Sciatic nerve (tissue), 2 donors: ENCODE measurements at regions of chr7 and their contacts with region 1.

Region 1: DNA sequence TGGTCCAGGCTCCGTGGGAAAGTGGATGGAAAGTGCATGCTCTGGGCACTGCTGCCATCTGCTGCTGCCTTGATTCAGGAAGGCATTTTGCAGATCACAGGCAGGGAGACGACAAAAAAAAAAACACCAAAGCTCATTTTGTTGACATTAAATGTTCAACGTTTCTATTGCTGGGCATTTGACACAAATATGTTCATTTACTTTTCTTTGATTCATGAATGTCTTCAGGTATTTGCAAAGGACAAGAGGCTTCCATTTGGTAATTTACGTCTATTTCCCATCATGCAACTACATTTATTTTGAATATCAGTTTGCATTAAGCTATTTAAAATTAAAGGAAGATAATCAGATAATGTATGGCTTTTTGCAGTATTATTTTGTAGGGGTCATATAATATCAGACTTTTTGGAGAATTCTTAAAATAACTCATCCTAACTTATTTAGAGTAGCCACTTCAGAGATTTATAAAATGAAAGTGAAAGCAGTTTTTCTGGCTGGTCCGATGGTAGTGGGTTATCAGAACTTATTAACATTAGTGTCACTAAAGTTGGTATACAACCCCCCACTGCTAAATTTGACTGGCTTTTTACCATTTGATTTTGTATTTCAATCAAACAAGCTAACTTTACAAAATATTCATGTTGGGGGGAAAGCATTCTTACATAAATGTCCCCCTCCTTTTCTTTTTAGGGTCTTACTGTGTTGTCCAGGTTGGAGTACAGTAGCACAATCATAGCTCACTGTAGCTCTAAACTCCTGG is 65.3 kb downstream of the PDIA4 start:
- DNase-seq: peak; percentile 73
- ATAC-seq: peak; percentile 88

Region 2: DNA sequence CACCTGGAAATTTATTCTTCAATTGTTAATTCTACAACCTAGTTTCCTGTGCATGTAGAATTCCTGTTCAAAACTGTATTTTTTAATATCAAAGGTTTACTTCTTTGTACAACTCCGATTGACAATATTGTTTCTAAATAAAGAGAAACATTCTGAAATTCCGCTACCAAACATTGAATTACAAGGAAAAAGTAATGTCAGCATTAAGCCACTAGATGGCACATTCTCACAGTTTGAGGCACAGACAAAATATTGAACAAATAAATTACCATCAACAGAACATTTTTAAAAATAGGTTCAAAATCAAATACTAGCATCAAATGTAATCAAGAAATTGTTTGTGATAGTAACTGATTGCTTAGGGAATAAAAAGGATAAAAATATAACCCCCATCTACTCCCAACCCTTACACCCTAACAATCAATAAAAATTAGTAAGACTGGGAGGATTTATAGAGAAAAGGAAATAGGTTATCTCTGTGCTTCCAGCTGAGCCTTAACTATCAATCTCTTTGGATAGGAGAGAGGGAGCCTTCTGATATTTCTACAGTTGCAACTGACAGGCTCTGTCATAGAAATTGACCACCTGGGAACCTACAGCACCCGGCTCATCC is 459.0 kb before region 1 on chr7:
- intact Hi-C with region 1: loop called (anchors 10 kb)
- DNase-seq: no peak
- ATAC-seq: no peak

Region 3: DNA sequence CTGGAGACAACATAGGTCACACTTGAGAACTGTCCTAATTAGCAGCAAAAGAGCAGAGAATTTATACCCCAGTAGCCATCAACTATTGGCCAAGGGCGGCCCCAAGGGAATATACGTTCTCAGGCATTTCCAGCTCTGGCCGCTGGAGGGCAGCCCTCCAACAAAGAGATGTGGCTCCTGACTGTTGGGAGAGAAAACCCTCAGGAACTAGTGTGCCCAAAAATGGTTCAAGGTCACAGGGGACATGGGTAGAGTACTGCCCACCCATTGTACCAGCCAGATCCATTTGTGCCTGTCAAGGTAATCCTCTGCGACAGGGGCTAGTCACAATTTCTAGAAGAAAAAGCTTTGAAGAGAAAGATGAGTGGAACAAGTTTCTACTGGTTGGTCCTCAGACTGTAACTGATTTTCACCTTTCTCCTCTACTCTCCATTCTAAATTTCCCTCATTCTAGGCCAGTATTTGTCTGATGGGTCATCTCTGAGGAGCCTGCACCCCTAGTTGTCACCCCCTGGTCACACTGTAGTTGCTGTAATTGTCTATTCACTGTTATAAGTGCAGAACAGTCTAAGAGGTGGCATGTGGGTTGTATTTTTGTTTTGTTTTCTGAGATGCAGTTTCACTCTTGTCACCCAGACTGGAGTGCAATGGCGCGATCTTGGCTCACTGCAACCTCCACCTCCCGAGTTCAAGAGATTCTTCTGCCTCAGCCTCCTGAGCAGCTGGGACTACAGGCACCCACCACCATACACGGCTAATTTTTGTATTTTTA is 387.2 kb before region 1 on chr7:
- intact Hi-C with region 1: loop called (anchors 5 kb)
- DNase-seq: peak; percentile 78
- ATAC-seq: peak; percentile 53

Region 4: DNA sequence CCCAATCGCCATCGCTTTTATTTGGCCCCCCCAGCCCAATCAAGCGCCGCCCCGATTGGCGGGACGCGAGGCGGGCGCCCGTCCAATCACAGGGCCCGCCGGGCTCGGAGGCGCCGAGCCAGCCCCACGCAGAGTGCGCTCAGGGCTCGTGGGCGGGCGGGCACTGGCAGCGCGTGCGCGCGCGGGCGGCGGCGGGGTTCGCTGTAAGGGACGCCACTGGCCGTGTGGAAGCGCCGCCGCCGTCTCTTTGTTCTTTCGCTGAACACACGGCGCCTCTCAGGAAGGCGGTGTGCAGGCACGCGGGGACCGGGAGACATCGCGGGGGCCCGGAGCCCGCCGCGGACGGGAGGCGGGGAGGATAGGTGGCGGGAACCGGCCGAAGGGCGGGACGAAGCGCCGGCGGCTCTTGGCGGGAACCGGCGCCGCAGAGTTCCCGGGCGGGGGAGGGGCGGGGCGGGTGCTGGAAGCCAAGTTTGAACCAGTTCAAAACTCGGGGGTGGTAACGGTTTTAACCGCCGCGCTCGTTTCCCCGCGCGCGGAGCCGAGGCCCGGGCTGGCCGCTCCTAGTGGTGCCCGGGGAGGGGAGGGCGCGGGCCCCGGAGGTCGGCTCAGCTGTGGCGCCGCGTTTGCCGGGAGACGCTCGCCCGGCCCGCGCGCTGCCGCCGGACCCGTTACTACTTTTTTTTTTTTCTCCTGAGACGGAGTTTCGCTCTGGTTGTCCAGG is 78.5 kb before region 1 on chr7:
- intact Hi-C with region 1: loop called (anchors 10 kb)
- DNase-seq: peak; percentile 96
- ATAC-seq: peak; percentile 100

Region 5: DNA sequence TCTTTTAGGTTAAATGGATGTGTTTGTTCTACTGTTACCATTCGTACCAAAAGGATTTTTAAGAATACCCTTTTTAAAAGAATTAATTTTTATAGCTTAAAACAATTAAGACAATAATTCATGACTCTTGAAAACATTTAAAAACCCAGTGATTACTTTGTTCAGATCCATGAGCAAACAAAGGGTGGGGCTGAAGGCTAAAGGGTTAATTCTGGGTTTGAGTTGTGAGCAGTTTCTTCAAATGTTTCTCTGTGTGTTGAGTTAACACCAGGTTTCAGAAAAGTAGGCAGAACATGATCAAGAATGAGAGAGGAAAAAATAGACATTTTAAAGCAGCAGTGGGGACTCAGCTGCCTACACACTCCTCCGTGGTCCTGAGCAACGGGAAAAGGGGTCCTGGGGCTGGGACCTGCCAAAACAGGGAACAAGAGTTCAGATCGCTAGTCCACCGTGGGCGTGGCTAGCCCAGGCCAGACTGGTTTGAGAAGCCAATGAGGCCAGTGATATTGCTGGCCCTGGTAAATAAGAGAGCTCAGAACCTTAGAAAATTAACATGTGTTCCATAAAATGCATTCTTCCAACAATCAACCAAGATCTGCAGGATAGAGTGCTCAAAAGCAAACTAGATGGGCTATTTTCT is 64.0 kb before region 1 on chr7:
- intact Hi-C with region 1: no loop called
- DNase-seq: no peak
- ATAC-seq: no peak

Region 6: GRCh38 chr7:149007611-149008010 is 44.6 kb after region 1 on chr7:
- intact Hi-C with region 1: no loop called
- DNase-seq: no peak
- ATAC-seq: no peak